GM12878 (cell line): ENCODE measurements at regions of chr1 and their contacts with region 1.

Region 1: GRCh38 chr1:159798893-159799292 is 3.3 kb upstream of the FCRL6 start:
- DNase-seq: no peak
- ATAC-seq: peak; percentile 82
- H3K4me3 ChIP-seq: no peak overlapping the region
- H3K27ac ChIP-seq: no peak overlapping the region
- H3K4me1 ChIP-seq: peaks cover 9% of the 10 kb centered on the region
- H3K27me3 ChIP-seq: peaks cover 3% of the 10 kb centered on the region in 2 experiments
- CTCF ChIP-seq: peak; percentile 68 to 77 (median 71)
- EP300 ChIP-seq: no peak
- POLR2A ChIP-seq: no peak
- RAD21 ChIP-seq: peak; percentile 78

Region 2: DNA sequence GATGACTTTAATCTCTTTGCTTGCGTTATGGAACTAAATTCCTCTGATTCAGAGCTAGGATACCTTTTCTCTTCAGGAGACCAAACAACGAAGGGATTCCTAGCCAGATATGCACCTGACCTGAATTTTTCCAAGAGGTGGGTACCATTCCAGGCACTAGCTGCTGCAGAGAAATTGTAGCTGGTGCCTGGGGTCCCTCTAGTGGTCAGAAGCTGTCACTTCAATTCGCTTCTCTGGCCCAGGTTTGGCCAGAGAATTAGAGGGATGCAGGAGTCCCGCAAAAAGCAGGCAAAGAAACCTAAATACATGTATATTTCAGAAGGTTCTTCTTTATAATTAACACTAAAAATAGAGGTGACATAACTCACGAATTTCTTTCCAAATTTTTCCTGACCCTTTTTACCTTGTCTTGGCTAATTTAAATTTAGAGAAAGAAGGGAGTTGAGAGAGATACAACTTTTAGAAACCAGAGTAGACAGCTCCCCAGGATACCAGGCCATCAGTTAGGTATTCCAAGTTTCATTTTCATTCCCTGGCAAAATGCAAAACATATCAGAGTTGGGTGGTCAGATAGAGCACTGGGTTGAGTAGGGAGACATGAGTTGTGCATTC is 584.6 kb before region 1 on chr1:
- CTCF ChIA-PET with region 1: interaction called, 5 read pairs
- POLR2A ChIA-PET with region 1: no interaction called
- RAD21 ChIA-PET with region 1: interaction called, 5 read pairs
- SMC1A ChIA-PET with region 1: no interaction called
- in situ Hi-C with region 1: no loop called
- intact Hi-C with region 1: loop called (anchors 10 kb)
- DNase-seq: no peak
- ATAC-seq: peak; percentile 81
- H3K4me3 ChIP-seq: no peak overlapping the region
- H3K27ac ChIP-seq: no peak overlapping the region
- H3K4me1 ChIP-seq: no peaks in the 10 kb centered on the region; the same call in 1 of the 2 replicates
- H3K27me3 ChIP-seq: peaks cover 1 to 6% of the 10 kb centered on the region in 2 experiments
- CTCF ChIP-seq: peak; percentile 86 to 88 (median 88)
- EP300 ChIP-seq: no peak
- POLR2A ChIP-seq: no peak
- RAD21 ChIP-seq: peak; percentile 78

Region 3: GRCh38 chr1:159780583-159781582 is 18.0 kb before region 1 on chr1 and contains the start of gene DUSP23:
- CTCF ChIA-PET with region 1: interaction called, 17 read pairs
- POLR2A ChIA-PET with region 1: no interaction called
- RAD21 ChIA-PET with region 1: interaction called, 3 read pairs
- SMC1A ChIA-PET with region 1: interaction called, 4 read pairs
- in situ Hi-C with region 1: no loop called
- intact Hi-C with region 1: no loop called
- DNase-seq: peak; percentile 81
- ATAC-seq: peak; percentile 100
- H3K4me3 ChIP-seq: peak within 1 kb of the TSS; percentile 29
- H3K27ac ChIP-seq: no peak within 1 kb of the TSS
- H3K4me1 ChIP-seq: no peaks in the 10 kb centered on the region
- H3K27me3 ChIP-seq: no peaks in the 10 kb centered on the region
- CTCF ChIP-seq: peak; percentile 78 to 81 (median 81)
- EP300 ChIP-seq: no peak
- POLR2A ChIP-seq: peak; percentile 76
- RAD21 ChIP-seq: peak; percentile 44; the same call in 1 of the 2 replicates
- polyA plus RNA-seq, gene DUSP23: 1.1 TPM in 1 of 2 experiments, not detected in the other

Region 4: DNA sequence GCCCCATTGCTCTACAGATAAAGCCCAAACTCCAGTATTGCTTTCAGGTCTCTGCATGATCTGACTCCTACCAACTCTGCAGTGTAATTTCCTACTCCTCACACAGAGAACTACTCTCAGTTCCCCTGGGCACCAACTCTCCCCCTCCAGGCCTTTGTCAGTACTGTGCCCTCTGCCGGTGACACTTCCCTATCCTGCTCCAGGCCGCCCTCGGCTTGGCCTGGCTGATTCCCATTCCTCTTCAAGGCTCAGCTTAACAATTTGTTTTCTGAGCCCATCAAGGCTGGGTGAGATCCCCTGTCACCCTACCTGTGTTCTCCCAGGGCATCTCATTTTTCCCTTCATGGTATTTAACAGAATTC is 30.4 kb after region 1 on chr1:
- CTCF ChIA-PET with region 1: interaction called, 178 read pairs
- POLR2A ChIA-PET with region 1: interaction called, 3 read pairs
- RAD21 ChIA-PET with region 1: interaction called, 7 read pairs
- SMC1A ChIA-PET with region 1: interaction called, 21 read pairs
- in situ Hi-C with region 1: no loop called
- intact Hi-C with region 1: loop called (anchors 2 kb)
- DNase-seq: peak; percentile 40
- ATAC-seq: peak; percentile 94
- H3K4me3 ChIP-seq: no peak overlapping the region
- H3K27ac ChIP-seq: no peak overlapping the region
- H3K4me1 ChIP-seq: peaks cover 35% of the 10 kb centered on the region
- H3K27me3 ChIP-seq: no peaks in the 10 kb centered on the region
- CTCF ChIP-seq: peak; percentile 46 to 71 (median 66)
- EP300 ChIP-seq: no peak
- POLR2A ChIP-seq: no peak
- RAD21 ChIP-seq: 0 out of 2 replicates have a peak, but pooled peaks have one; percentile 26

Region 5: DNA sequence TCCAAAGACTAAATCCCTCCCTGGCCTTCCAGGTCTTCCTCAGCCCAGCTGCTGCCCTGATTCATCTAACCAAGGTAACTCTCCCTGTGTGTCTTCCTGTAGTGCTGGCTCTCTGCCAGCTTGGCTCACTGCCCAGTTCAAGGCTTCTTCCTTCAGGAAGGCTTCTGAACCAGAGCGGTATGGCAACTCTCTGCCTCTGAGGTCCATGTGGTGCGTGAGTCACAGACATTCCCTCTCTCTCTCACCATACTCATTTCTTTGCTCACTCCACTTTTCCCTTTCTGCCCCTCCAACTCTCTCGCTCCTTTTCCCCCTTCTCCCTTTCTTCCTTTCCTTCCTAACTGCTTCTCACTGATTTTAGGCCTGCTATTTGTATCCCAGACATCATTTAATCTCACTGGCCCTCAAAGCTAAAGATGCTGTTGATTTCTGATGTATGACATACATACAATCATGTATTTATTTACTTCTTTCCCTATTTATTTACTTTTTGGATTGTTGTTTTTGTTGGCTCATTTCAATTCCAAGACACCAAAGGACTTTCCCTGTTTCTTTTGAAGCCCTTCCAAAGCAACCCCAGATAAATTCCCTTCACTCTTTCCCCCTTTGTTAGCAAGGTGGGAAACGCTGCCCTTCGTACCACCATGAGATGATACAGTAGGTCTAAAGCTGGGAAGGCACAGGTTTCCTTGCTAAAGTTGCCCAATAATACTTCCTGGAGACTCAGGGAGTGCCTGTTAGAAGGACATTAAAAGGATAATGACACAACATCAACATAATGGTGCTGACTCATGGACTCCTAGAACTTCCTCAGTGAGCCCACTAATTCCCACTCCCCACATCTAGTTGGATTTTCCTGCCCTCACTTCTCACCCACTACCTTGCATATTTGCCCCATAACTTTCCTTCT is 83.3 kb after region 1 on chr1:
- CTCF ChIA-PET with region 1: interaction called, 476 read pairs
- POLR2A ChIA-PET with region 1: no interaction called
- RAD21 ChIA-PET with region 1: interaction called, 8 read pairs
- SMC1A ChIA-PET with region 1: interaction called, 289 read pairs
- in situ Hi-C with region 1: no loop called
- intact Hi-C with region 1: no loop called
- DNase-seq: no peak
- ATAC-seq: no peak
- H3K4me3 ChIP-seq: no peak overlapping the region
- H3K27ac ChIP-seq: no peak overlapping the region
- H3K4me1 ChIP-seq: peaks cover under 1% of the 10 kb centered on the region; the same call in 1 of the 2 replicates
- H3K27me3 ChIP-seq: no peaks in the 10 kb centered on the region
- CTCF ChIP-seq: no peak
- EP300 ChIP-seq: no peak
- POLR2A ChIP-seq: no peak
- RAD21 ChIP-seq: no peak

Region 6: DNA sequence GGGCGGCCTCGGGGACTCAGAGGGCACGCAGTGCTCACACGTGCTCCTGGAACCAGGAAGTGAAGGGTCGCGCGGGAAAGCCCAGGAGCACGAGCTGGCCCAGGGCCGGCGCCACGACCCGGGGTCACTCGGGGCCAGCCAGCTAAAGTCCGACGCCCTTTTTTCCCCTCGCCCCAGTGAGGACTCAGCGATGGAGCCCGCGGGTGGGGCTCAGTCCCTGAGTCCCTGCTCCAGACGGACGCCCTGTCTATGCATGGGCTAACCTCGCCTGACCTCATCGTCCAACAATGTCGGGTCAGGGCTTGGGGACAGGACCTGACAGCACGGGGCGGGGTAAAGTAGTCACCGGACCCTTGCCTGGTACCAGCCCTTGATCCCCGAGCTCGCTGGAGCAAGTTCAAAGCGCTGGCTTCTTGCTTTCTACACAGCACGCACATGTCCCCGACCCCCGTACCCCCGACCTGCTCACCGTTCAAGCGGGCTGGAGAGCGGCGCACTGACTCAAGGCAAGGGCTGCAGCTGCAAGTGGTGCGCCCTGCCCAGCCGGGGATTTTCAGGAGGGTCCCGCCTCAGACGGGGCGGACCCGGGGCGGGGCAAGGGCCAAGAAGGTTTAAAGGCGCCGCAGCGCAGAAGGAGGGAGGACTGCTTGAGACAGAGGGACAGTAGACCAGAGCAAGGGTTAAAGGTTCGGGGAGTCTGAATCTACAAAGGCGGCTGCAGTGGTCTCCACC is 126.3 kb after region 1 on chr1 and contains the start of gene TAGLN2:
- CTCF ChIA-PET with region 1: interaction called, 14 read pairs
- POLR2A ChIA-PET with region 1: no interaction called
- RAD21 ChIA-PET with region 1: interaction called, 4 read pairs
- SMC1A ChIA-PET with region 1: interaction called, 10 read pairs
- in situ Hi-C with region 1: no loop called
- intact Hi-C with region 1: no loop called
- DNase-seq: peak; percentile 60
- ATAC-seq: peak; percentile 73
- H3K4me3 ChIP-seq: peak within 1 kb of the TSS; percentile 82
- H3K27ac ChIP-seq: peak within 1 kb of the TSS; percentile 82
- H3K4me1 ChIP-seq: peaks cover 32% of the 10 kb centered on the region
- H3K27me3 ChIP-seq: no peaks in the 10 kb centered on the region
- CTCF ChIP-seq: no peak
- EP300 ChIP-seq: no peak
- POLR2A ChIP-seq: peak; percentile 99
- RAD21 ChIP-seq: no peak
- polyA plus RNA-seq, gene TAGLN2: 216 to 262 TPM

Region 7: GRCh38 chr1:159936273-159936904 is 137.5 kb after region 1 on chr1:
- CTCF ChIA-PET with region 1: interaction called, 14 read pairs
- POLR2A ChIA-PET with region 1: no interaction called
- RAD21 ChIA-PET with region 1: no interaction called
- SMC1A ChIA-PET with region 1: interaction called, 4 read pairs
- in situ Hi-C with region 1: no loop called
- intact Hi-C with region 1: no loop called
- DNase-seq: no peak
- ATAC-seq: peak; percentile 86
- H3K4me3 ChIP-seq: no peak overlapping the region
- H3K27ac ChIP-seq: no peak overlapping the region
- H3K4me1 ChIP-seq: peaks cover 23% of the 10 kb centered on the region
- H3K27me3 ChIP-seq: 0 out of 4 replicates have a peak, but pooled peaks cover 0 to 2% of the 10 kb centered on the region in 2 experiments
- CTCF ChIP-seq: peak; percentile 98; a peak in 5 of 6 replicates
- EP300 ChIP-seq: no peak
- POLR2A ChIP-seq: no peak
- RAD21 ChIP-seq: peak; percentile 87

Region 8: DNA sequence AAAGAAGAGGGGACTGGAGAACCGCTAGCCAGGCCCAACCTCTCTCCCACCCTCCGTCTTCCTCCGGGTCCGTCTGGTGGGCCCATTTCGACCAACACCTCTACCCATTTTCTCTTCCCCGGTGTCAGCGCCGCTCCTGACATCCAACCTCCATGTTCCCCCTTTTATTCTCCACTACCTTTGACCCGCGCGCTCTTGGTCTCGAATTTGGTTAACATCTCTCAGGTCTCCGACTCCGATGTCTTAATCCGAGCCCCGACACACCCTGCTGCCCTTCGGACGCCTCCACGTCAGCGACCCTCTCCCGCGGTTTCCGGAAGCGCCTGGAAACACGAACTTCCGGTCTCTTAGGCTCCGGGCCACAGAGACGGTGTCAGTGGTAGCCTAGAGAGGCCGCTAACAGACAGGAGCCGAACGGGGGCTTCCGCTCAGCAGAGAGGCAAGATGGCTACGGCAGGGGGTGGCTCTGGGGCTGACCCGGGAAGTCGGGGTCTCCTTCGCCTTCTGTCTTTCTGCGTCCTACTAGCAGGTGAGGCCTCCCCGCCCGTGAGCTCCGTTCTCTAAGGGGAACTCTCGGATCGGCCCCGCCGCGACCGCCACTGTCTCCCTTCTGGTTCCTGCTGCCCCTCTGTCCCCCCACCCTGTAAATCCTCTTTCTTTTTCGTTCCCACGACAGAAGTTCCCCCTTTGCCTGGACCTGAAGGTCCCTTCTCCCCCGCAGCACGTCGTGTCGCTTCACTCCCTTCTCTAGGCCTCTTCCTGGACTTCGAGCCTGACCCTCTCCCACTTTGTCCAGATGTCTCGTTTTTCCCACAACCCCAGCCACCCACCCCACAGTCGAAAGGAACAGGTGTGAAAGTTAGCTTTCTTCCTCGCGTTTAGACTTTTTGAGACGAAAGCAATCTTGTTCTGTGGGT is 544.3 kb after region 1 on chr1 and contains the starts of genes COPA and NCSTN:
- CTCF ChIA-PET with region 1: no interaction called
- POLR2A ChIA-PET with region 1: no interaction called
- RAD21 ChIA-PET with region 1: no interaction called
- SMC1A ChIA-PET with region 1: no interaction called
- in situ Hi-C with region 1: no loop called
- intact Hi-C with region 1: no loop called
- DNase-seq: peak; percentile 75
- ATAC-seq: peak; percentile 90
- H3K4me3 ChIP-seq: peak within 1 kb of the TSS; percentile 96
- H3K27ac ChIP-seq: peak within 1 kb of the TSS; percentile 97
- H3K4me1 ChIP-seq: peaks cover 23% of the 10 kb centered on the region
- H3K27me3 ChIP-seq: no peaks in the 10 kb centered on the region
- CTCF ChIP-seq: no peak
- EP300 ChIP-seq: no peak
- POLR2A ChIP-seq: peak; percentile 96
- RAD21 ChIP-seq: no peak
- polyA plus RNA-seq, gene COPA: 53.7 to 70.6 TPM
- polyA plus RNA-seq, gene NCSTN: 33.3 to 41.6 TPM